ENCODE measurements at regions of chr16 and their contacts with region 1.

Region 1: GRCh38 chr16:68902008-68902968 is 59.0 kb downstream of the TANGO6 start:
- DNase-seq: peak; percentile 77
- ATAC-seq: peak; percentile 81
- H3K4me3 ChIP-seq: no peak overlapping the region
- H3K27ac ChIP-seq: peak overlapping the region; percentile 34; the same call in 1 of the 2 replicates
- H3K4me1 ChIP-seq: peaks cover 2% of the 10 kb centered on the region
- H3K27me3 ChIP-seq: no peaks in the 10 kb centered on the region
- CTCF ChIP-seq: peak; percentile 82
- POLR2A ChIP-seq: no peak
- RAD21 ChIP-seq: peak; percentile 86

Region 2: GRCh38 chr16:68528686-68529379 is 373.5 kb before region 1 on chr16:
- CTCF ChIA-PET with region 1: no interaction called
- POLR2A ChIA-PET with region 1: no interaction called
- dilution Hi-C with region 1: no loop called
- in situ Hi-C with region 1: no loop called
- intact Hi-C with region 1: loop called (anchors 5 kb)
- DNase-seq: peak; percentile 64
- ATAC-seq: peak; percentile 92
- H3K4me3 ChIP-seq: no peak overlapping the region
- H3K27ac ChIP-seq: no peak overlapping the region
- H3K4me1 ChIP-seq: 0 out of 2 replicates have a peak, but pooled peaks cover 3% of the 10 kb centered on the region
- H3K27me3 ChIP-seq: no peaks in the 10 kb centered on the region
- CTCF ChIP-seq: peak; percentile 96
- POLR2A ChIP-seq: no peak
- RAD21 ChIP-seq: peak; percentile 93

Region 3: DNA sequence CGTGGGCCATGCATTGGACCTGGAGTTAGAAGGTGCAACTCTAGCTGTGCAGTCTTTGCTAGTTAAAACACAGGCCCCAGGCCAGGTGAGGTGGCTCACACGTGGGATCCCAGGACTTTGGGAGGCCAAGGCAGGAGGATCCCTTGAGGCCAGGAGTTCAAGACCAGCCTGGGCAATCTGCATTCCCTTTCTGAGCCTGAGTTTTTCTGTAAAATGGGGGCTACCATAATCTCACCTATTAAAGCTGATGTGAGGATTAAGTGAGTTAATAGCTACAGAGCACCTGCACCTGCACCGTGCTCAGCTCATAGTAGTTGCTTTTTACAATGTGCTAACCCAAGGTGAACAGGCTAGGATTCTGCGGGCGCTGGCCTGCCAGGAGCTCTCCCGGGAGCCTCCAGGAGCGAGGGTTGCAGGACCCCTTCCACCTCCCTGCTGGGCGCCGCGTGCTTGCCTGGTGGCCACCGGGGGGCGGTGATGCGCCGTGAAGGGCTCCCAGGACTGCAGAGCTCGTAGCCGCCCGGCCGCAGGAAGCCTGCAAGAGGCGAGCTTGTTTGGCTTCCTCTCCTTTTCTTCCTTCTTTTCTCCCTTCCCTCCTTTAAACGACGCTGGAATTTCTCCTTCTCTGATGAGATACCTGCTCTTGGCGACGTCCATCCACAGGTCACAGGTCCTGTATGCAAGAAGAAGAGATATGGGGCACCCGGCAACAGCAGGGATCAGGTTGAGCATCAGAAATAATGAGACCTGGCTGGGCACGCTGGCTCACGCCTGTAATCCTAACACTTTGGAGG is 311.9 kb before region 1 on chr16:
- CTCF ChIA-PET with region 1: no interaction called
- POLR2A ChIA-PET with region 1: no interaction called
- dilution Hi-C with region 1: no loop called
- in situ Hi-C with region 1: no loop called
- intact Hi-C with region 1: loop called (anchors 2 kb)
- DNase-seq: peak; percentile 7
- ATAC-seq: peak; percentile 98
- H3K4me3 ChIP-seq: no peak overlapping the region
- H3K27ac ChIP-seq: no peak overlapping the region
- H3K4me1 ChIP-seq: no peaks in the 10 kb centered on the region
- H3K27me3 ChIP-seq: no peaks in the 10 kb centered on the region
- CTCF ChIP-seq: peak; percentile 42
- POLR2A ChIP-seq: no peak
- RAD21 ChIP-seq: peak; percentile 51

Region 4: GRCh38 chr16:68951991-68952877 is 49.9 kb after region 1 on chr16:
- CTCF ChIA-PET with region 1: no interaction called
- POLR2A ChIA-PET with region 1: no interaction called
- dilution Hi-C with region 1: no loop called
- in situ Hi-C with region 1: no loop called
- intact Hi-C with region 1: no loop called
- DNase-seq: peak; percentile 24
- ATAC-seq: peak; percentile 17; the same call in 1 of the 2 replicates
- H3K4me3 ChIP-seq: no peak overlapping the region
- H3K27ac ChIP-seq: no peak overlapping the region
- H3K4me1 ChIP-seq: peaks cover 2% of the 10 kb centered on the region; the same call in 1 of the 2 replicates
- H3K27me3 ChIP-seq: no peaks in the 10 kb centered on the region
- CTCF ChIP-seq: no peak
- POLR2A ChIP-seq: no peak
- RAD21 ChIP-seq: no peak

Region 5: GRCh38 chr16:69049146-69049545 is 146.9 kb after region 1 on chr16:
- CTCF ChIA-PET with region 1: no interaction called
- POLR2A ChIA-PET with region 1: no interaction called
- dilution Hi-C with region 1: no loop called
- in situ Hi-C with region 1: no loop called
- intact Hi-C with region 1: loop called (anchors 1 kb)
- DNase-seq: peak; percentile 80
- ATAC-seq: peak; percentile 93
- H3K4me3 ChIP-seq: no peak overlapping the region
- H3K27ac ChIP-seq: peak overlapping the region; percentile 40; the same call in 1 of the 2 replicates
- H3K4me1 ChIP-seq: peaks cover 7% of the 10 kb centered on the region
- H3K27me3 ChIP-seq: no peaks in the 10 kb centered on the region
- CTCF ChIP-seq: no peak
- POLR2A ChIP-seq: no peak
- RAD21 ChIP-seq: no peak

Region 6: DNA sequence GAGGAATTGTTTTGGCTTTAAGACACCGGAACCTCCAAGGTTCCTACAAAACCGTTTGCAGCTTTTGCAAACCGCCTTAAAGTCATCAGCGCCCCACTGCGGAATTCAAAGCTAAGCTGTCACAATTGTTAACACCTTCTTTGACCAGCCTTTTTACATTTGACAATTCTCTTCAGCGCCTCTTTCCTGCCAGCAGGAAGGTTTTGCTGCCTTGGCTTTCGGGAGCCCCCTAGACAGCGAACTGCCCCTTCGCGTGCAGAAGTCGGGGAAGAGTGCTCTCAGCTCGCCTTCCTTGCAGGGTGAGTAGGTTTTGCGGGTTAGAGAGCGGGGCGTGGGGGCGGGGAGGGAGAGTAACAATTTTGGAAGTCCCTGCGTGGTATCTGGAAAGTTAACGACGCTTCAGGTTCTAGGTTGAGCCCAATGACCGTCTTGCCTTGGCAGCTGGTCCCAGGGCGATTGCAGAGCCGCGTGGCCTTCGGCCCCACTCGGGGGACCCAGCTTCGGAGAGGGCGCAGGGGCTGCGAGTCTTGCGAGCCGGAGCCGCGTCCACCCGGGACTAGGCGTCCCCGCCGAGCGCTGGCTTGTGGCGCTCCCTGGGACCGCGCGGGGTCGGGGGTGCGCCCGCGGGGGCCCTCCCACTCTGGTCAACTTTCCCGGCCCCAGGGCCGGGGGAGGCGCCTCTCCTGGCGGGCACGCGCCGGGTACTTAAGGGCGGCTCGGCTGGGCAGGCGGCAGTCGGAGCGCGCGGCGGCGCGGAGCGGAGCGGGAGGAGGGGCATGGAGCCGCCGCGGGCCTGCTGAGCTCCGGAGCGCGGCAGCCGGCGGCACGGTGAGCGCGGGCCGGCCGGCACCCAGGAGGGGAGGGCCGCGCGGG is 203.4 kb after region 1 on chr16 and contains the start of gene HAS3:
- CTCF ChIA-PET with region 1: interaction called, 7 read pairs
- POLR2A ChIA-PET with region 1: no interaction called
- dilution Hi-C with region 1: no loop called
- in situ Hi-C with region 1: no loop called
- intact Hi-C with region 1: loop called (anchors 1 kb)
- DNase-seq: peak; percentile 48
- ATAC-seq: peak; percentile 90
- H3K4me3 ChIP-seq: peak within 1 kb of the TSS; percentile 60
- H3K27ac ChIP-seq: no peak within 1 kb of the TSS
- H3K4me1 ChIP-seq: peaks cover 7% of the 10 kb centered on the region; the same call in 1 of the 2 replicates
- H3K27me3 ChIP-seq: no peaks in the 10 kb centered on the region
- CTCF ChIP-seq: peak; percentile 36
- POLR2A ChIP-seq: peak; percentile 62
- RAD21 ChIP-seq: peak; percentile 41
- total RNA-seq, gene HAS3: 0.28 and 0.36 TPM in 2 replicates

Region 7: GRCh38 chr16:69112285-69113129 is 210.2 kb after region 1 on chr16:
- CTCF ChIA-PET with region 1: interaction called, 4 read pairs
- POLR2A ChIA-PET with region 1: no interaction called
- dilution Hi-C with region 1: no loop called
- in situ Hi-C with region 1: loop called (anchors 5 kb)
- intact Hi-C with region 1: no loop called
- DNase-seq: peak; percentile 25
- ATAC-seq: peak; percentile 87
- H3K4me3 ChIP-seq: no peak overlapping the region
- H3K27ac ChIP-seq: no peak overlapping the region
- H3K4me1 ChIP-seq: no peaks in the 10 kb centered on the region
- H3K27me3 ChIP-seq: no peaks in the 10 kb centered on the region
- CTCF ChIP-seq: peak; percentile 57
- POLR2A ChIP-seq: no peak
- RAD21 ChIP-seq: peak; percentile 51; the same call in 1 of the 2 replicates

Region 8: GRCh38 chr16:69123910-69124309 is 221.6 kb after region 1 on chr16:
- CTCF ChIA-PET with region 1: interaction called, 18 read pairs
- POLR2A ChIA-PET with region 1: no interaction called
- dilution Hi-C with region 1: no loop called
- in situ Hi-C with region 1: loop called (anchors 5 kb)
- intact Hi-C with region 1: loop called (anchors 1 kb)
- DNase-seq: peak; percentile 76
- ATAC-seq: peak; percentile 81
- H3K4me3 ChIP-seq: no peak overlapping the region
- H3K27ac ChIP-seq: no peak overlapping the region
- H3K4me1 ChIP-seq: no peaks in the 10 kb centered on the region
- H3K27me3 ChIP-seq: no peaks in the 10 kb centered on the region
- CTCF ChIP-seq: peak; percentile 81
- POLR2A ChIP-seq: 0 out of 2 replicates have a peak, but pooled peaks have one; percentile 30
- RAD21 ChIP-seq: peak; percentile 86

Measured in IMR-90 (cell line).